WTC11 (cell line): ENCODE measurements at regions of chr1 and their contacts with region 1.

Region 1: GRCh38 chr1:6423321-6423999 is 1.1 kb upstream of the ESPN start:
- DNase-seq: peak; percentile 91
- ATAC-seq: peak; percentile 57
- H3K4me3 Mint-ChIP-seq: peak overlapping the region; percentile 60
- H3K27ac Mint-ChIP-seq: no peak overlapping the region
- H3K4me1 Mint-ChIP-seq: peaks cover 6% of the 10 kb centered on the region
- H3K27me3 Mint-ChIP-seq: peaks cover 81% of the 10 kb centered on the region
- CTCF ChIP-seq: peak; percentile 91

Region 2: DNA sequence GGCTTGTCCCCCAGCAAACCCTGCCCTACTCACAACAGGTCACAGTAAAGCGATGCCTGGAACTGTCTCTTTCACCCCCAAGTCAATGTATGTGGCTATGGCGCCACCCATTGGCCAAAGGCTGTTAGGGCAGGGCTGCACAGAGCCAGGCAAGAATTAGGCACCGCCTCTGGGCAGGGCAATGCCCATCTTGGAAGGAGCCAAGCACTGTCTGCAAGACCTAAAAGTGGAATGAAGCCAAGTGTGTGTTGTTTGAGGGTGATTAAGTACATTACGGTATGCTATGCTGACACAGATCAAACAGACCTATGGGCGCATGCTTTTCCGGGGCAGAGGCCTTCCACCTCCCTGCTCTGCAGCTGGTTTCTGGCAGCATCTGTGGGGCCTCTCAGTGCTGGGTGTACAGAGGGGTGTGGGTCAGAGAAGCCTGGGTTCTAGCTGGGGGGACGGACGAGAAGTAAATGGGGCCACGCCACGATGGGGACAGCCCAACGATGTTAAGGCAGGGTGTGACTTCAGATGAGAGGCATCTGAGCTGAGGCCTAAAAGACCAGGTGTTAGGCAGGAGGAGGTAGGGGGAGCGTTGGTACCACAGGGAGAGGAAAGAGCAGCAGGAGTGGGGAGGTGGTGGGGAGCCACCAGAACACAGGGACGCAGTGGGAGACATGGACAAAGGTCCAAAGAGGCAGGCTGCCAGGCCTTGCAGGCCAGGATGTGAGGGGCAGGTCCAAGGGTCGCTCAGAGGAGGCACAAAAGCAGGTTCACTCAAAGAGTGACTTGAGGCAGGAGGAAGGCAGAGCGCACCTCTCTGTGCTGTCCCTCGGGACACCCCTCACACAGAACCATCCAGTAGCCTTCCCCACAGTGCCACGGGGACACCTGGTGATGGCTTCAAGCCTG is 79.7 kb before region 1 on chr1:
- CTCF ChIA-PET with region 1: interaction called, 10 read pairs
- POLR2A ChIA-PET with region 1: no interaction called
- DNase-seq: peak; percentile 91
- ATAC-seq: peak; percentile 92
- H3K4me3 Mint-ChIP-seq: no peak overlapping the region
- H3K27ac Mint-ChIP-seq: peak overlapping the region; percentile 60
- H3K4me1 Mint-ChIP-seq: peaks cover 14% of the 10 kb centered on the region
- H3K27me3 Mint-ChIP-seq: no peaks in the 10 kb centered on the region
- CTCF ChIP-seq: peak; percentile 94

Region 3: GRCh38 chr1:6393400-6394187 is 29.9 kb before region 1 on chr1 and contains the start of gene ACOT7:
- CTCF ChIA-PET with region 1: interaction called, 12 read pairs
- POLR2A ChIA-PET with region 1: no interaction called
- DNase-seq: peak; percentile 89
- ATAC-seq: peak; percentile 88
- H3K4me3 Mint-ChIP-seq: peak within 1 kb of the TSS; percentile 80
- H3K27ac Mint-ChIP-seq: peak within 1 kb of the TSS; percentile 95
- H3K4me1 Mint-ChIP-seq: peaks cover 18% of the 10 kb centered on the region
- H3K27me3 Mint-ChIP-seq: peaks cover 9% of the 10 kb centered on the region
- CTCF ChIP-seq: no peak
- total RNA-seq, gene ACOT7: 133 to 151 TPM (median 137 TPM) in 3 replicates

Region 4: GRCh38 chr1:6445062-6445763 is 21.8 kb after region 1 on chr1:
- CTCF ChIA-PET with region 1: interaction called, 281 read pairs
- POLR2A ChIA-PET with region 1: no interaction called
- DNase-seq: peak; percentile 78
- ATAC-seq: peak; percentile 14
- H3K4me3 Mint-ChIP-seq: no peak overlapping the region
- H3K27ac Mint-ChIP-seq: peak overlapping the region; percentile 58
- H3K4me1 Mint-ChIP-seq: peaks cover 37% of the 10 kb centered on the region
- H3K27me3 Mint-ChIP-seq: peaks cover 17% of the 10 kb centered on the region
- CTCF ChIP-seq: peak; percentile 49; the same call in 1 of the 2 replicates

Region 5: GRCh38 chr1:6475381-6476133 is 52.1 kb after region 1 on chr1:
- CTCF ChIA-PET with region 1: interaction called, 10 read pairs
- POLR2A ChIA-PET with region 1: no interaction called
- DNase-seq: peak; percentile 80
- ATAC-seq: peak; percentile 34
- H3K4me3 Mint-ChIP-seq: no peak overlapping the region
- H3K27ac Mint-ChIP-seq: no peak overlapping the region
- H3K4me1 Mint-ChIP-seq: peaks cover 34% of the 10 kb centered on the region
- H3K27me3 Mint-ChIP-seq: no peaks in the 10 kb centered on the region
- CTCF ChIP-seq: peak; percentile 97